CD8-positive, alpha-beta memory T cell (primary cell): ENCODE measurements at regions of chr2 and their contacts with region 1.

Region 1: DNA sequence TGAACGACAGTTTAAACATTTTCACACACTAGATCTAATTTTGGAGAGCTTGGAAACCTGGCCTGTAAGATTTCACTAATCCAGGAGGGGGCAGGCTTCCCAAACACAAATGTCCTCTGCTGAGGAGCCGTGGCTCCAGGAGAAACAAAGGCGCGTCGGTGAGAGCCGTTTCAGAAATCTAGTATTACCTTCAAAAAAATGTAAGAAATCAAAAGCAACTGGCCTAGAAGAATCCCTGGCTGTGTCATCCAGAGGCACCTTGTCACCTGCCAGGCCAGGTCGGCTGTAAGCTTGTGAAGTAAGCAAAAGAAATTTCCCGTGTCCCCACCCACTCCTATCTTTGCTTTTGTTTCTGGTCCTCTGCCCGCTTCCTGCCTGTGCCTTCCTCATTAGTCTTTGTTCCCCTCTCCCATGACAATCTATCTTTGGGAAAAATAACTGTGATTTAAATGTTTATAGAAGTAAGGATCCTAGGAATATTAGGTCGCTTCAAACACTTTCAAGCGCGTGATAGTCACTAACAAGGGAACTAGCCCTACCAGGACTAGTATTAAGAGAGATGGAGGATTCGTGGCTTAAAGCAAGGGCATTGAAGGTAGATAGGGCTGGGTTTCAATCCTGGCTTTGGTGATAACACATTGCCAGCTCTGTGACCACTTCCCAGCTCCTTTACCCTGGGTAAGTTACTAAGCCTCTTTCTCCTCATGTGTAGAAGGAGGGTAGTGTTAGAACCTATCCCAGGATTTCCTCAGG is 99.5 kb upstream of the STK39 start:
- DNase-seq: peak; percentile 47 to 66 (median 58)
- H3K4me3 ChIP-seq: peak overlapping the region; percentile 52
- H3K4me3 Mint-ChIP-seq: peak overlapping the region; percentile 43 to 90 (median 87)
- H3K27ac ChIP-seq: no peak overlapping the region
- H3K27ac Mint-ChIP-seq: peak overlapping the region in 5 of 8 donors; percentile 19 to 82 (median 75)
- H3K4me1 ChIP-seq: peaks cover 5% of the 10 kb centered on the region
- H3K4me1 Mint-ChIP-seq: peaks cover 5 to 8% (median 7%) of the 10 kb centered on the region in 3 donors
- H3K27me3 ChIP-seq: no peaks in the 10 kb centered on the region
- H3K27me3 Mint-ChIP-seq: peaks cover 8 to 36% of the 10 kb centered on the region in 2 donors

Region 2: GRCh38 chr2:168375195-168375798 is 28.4 kb after region 1 on chr2:
- CTCF ChIA-PET with region 1: no interaction called
- POLR2A ChIA-PET with region 1: no interaction called
- DNase-seq: no peak
- H3K4me3 ChIP-seq: no peak overlapping the region
- H3K4me3 Mint-ChIP-seq: no peak overlapping the region
- H3K27ac ChIP-seq: no peak overlapping the region
- H3K27ac Mint-ChIP-seq: no peak overlapping the region
- H3K4me1 ChIP-seq: peaks cover 20% of the 10 kb centered on the region
- H3K4me1 Mint-ChIP-seq: peaks cover 22 to 42% (median 37%) of the 10 kb centered on the region in 3 donors
- H3K27me3 ChIP-seq: no peaks in the 10 kb centered on the region
- H3K27me3 Mint-ChIP-seq: peaks cover 2 to 15% of the 10 kb centered on the region in 2 donors

Region 3: DNA sequence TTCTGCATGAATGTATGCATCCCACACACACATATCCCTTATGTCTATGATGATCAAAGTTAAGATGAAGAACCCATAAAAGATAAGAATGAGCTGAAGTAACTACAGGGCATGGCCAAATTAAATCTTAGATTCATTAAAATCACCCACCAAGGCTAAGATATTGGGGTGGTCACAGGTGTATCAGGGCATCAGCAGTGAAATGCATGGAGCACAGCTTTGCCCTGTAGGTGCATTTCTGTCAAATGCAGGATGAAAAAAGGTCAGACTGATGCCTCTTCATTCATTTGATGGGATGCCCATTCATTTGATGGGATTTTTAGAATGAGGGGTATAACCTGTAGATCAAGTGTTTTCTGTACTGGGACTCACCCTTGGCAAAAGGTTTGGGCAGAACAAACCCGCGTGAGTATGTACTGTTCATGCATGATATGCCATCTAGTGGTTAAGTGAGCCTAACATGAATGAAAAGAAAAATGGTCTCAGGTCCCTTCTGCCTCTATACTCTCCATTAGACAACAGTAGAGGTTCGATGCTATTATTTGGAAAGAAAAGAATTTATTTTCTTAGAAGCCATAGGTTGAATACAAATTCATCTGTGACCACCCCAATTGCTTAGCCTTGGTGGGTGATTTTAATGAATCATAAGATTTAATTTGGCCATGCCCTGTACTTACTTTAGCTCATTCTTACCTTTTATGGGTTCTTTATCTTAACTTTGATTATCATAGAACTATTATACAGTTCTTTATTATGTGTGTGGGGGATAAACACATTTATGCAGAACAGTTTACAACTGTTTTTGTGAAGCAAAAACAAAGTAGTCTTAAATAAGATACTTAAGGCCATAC is 412.3 kb after region 1 on chr2:
- CTCF ChIA-PET with region 1: interaction called, 20 read pairs
- POLR2A ChIA-PET with region 1: no interaction called
- DNase-seq: peak in 2 of 5 donors; percentile 38 to 43
- H3K4me3 ChIP-seq: no peak overlapping the region
- H3K4me3 Mint-ChIP-seq: no peak overlapping the region
- H3K27ac ChIP-seq: no peak overlapping the region
- H3K27ac Mint-ChIP-seq: peak overlapping the region in 1 of 8 donors; percentile 2
- H3K4me1 ChIP-seq: peaks cover 45% of the 10 kb centered on the region
- H3K4me1 Mint-ChIP-seq: peaks cover 46 to 50% (median 49%) of the 10 kb centered on the region in 3 donors
- H3K27me3 ChIP-seq: no peaks in the 10 kb centered on the region
- H3K27me3 Mint-ChIP-seq: no peaks in the 10 kb centered on the region

Region 4: GRCh38 chr2:168920504-168921157 is 573.7 kb after region 1 on chr2:
- CTCF ChIA-PET with region 1: interaction called, 39 read pairs
- POLR2A ChIA-PET with region 1: no interaction called
- DNase-seq: peak in 2 of 5 donors; percentile 17 to 23
- H3K4me3 ChIP-seq: no peak overlapping the region
- H3K4me3 Mint-ChIP-seq: no peak overlapping the region
- H3K27ac ChIP-seq: no peak overlapping the region
- H3K27ac Mint-ChIP-seq: no peak overlapping the region
- H3K4me1 ChIP-seq: no peaks in the 10 kb centered on the region
- H3K4me1 Mint-ChIP-seq: peaks cover 2 to 6% (median 4%) of the 10 kb centered on the region in 3 donors
- H3K27me3 ChIP-seq: no peaks in the 10 kb centered on the region
- H3K27me3 Mint-ChIP-seq: peaks cover 9 to 42% of the 10 kb centered on the region in 2 donors